K562 (cell line): ENCODE measurements at regions of chr3 and their contacts with region 1.

Region 1: DNA sequence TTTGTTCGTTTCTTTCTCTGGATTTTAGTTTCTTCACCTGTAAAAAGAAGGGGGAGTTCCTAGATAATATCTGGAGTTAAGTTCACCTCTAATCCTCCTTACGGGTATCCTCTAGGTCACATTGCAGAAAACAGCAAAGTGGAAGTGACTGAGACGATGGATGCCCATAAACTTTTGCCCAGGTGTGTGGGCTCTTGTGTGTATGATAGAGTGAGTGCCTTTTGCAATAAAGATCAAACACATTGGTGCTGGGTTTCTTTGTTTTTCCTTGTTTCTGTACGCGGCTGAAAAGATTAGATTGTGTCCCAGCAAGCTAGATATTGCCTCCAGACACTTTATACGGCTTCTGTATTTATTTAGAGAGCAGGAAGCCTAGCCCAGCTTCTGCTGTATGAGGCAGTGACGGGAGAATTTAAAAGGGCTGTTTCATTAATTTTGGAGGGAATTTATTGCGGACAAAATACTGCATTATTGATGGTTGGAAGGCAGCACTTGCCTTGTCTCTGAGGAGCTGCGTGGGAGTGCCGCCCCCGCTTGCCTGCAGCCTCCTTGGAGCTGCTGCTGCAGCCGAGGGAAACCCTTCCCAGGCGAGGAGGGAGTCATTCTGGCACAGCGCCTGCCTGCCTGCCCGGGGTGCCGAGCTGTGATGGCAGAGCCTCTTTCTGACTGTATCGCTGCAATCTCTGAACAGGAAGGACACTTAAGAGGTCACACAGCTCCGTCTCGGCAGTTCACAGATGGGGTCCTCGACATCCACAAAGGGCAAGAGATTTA is 38.5 kb downstream of the PYDC2 start:
- DNase-seq: peak in 3 of 4 experiments; percentile 12 to 68 (median 48)
- ATAC-seq: peak; percentile 88
- H3K4me3 ChIP-seq: no peak overlapping the region; the same call in 1 of the 2 replicates
- H3K27ac ChIP-seq: peak overlapping the region; percentile 23; the same call in 1 of the 3 replicates
- H3K4me1 ChIP-seq: peaks cover 4 to 10% of the 10 kb centered on the region in 2 experiments; a peak in 4 of 5 replicates
- H3K27me3 ChIP-seq: no peaks in the 10 kb centered on the region
- CTCF ChIP-seq: no peak
- EP300 ChIP-seq: no peak
- POLR2A ChIP-seq: no peak
- RAD21 ChIP-seq: no peak

Region 2: GRCh38 chr3:190911382-190911781 is 588.1 kb before region 1 on chr3:
- CTCF ChIA-PET with region 1: no interaction called
- POLR2A ChIA-PET with region 1: no interaction called
- in situ Hi-C with region 1: no loop called
- intact Hi-C with region 1: no loop called
- DNase-seq: no peak
- ATAC-seq: no peak
- H3K4me3 ChIP-seq: no peak overlapping the region
- H3K27ac ChIP-seq: no peak overlapping the region
- H3K4me1 ChIP-seq: no peaks in the 10 kb centered on the region
- H3K27me3 ChIP-seq: no peaks in the 10 kb centered on the region
- CTCF ChIP-seq: no peak
- EP300 ChIP-seq: no peak
- POLR2A ChIP-seq: no peak
- RAD21 ChIP-seq: no peak

Region 3: GRCh38 chr3:191425322-191425734 is 74.2 kb before region 1 on chr3:
- CTCF ChIA-PET with region 1: no interaction called
- POLR2A ChIA-PET with region 1: no interaction called
- in situ Hi-C with region 1: no loop called
- intact Hi-C with region 1: loop called (anchors 5 kb)
- DNase-seq: peak; percentile 37 to 85 (median 51)
- ATAC-seq: peak; percentile 88
- H3K4me3 ChIP-seq: peak overlapping the region; percentile 56
- H3K27ac ChIP-seq: peak overlapping the region; percentile 71
- H3K4me1 ChIP-seq: peaks cover 0 to 3% of the 10 kb centered on the region in 2 experiments; a peak in 2 of 5 replicates
- H3K27me3 ChIP-seq: no peaks in the 10 kb centered on the region
- CTCF ChIP-seq: no peak
- EP300 ChIP-seq: no peak
- POLR2A ChIP-seq: peak; percentile 96
- RAD21 ChIP-seq: no peak

Region 4: GRCh38 chr3:191592105-191592504 is 92.6 kb after region 1 on chr3:
- CTCF ChIA-PET with region 1: no interaction called
- POLR2A ChIA-PET with region 1: no interaction called
- in situ Hi-C with region 1: no loop called
- intact Hi-C with region 1: no loop called
- DNase-seq: no peak
- ATAC-seq: no peak
- H3K4me3 ChIP-seq: no peak overlapping the region
- H3K27ac ChIP-seq: no peak overlapping the region
- H3K4me1 ChIP-seq: no peaks in the 10 kb centered on the region
- H3K27me3 ChIP-seq: no peaks in the 10 kb centered on the region
- CTCF ChIP-seq: no peak
- EP300 ChIP-seq: no peak
- POLR2A ChIP-seq: no peak
- RAD21 ChIP-seq: no peak